H1 (cell line): ENCODE measurements at regions of chr18 and their contacts with region 1.

Region 1: DNA sequence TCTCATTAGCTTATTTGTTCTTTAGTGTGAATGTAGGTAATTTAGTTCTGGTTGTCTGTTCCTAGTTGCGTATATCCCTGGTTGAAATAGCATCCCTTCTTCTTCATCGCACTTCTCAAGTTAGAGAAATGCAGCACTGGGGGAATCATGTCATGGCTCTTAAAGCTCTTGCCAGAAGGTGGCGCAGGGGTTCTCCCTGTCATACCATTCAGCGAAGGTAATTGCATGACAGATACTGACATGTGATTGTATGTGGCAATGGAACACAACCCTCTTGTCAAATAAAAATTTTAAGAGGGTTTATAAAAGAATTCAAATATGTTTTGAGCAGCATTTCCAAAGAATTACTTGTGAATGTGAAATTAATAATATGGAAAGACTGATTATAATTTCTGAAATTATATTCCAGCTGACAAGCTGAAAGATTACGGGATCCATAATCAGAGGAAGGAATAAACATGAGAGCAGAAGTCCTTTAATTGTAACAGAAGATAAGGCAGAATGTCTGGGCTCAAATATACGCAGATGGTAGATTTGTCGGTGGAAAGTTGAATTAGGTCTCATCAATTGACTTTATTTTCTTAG is 411.7 kb downstream of the DSEL start:
- DNase-seq: peak; percentile 25 to 69
- H3K4me3 ChIP-seq: no peak overlapping the region
- H3K27ac ChIP-seq: no peak overlapping the region
- H3K4me1 ChIP-seq: no peaks in the 10 kb centered on the region
- H3K27me3 ChIP-seq: no peaks in the 10 kb centered on the region
- CTCF ChIP-seq: peak; percentile 40 to 83 (median 72)
- EP300 ChIP-seq: no peak
- POLR2A ChIP-seq: no peak
- RAD21 ChIP-seq: peak; percentile 80 to 84

Region 2: DNA sequence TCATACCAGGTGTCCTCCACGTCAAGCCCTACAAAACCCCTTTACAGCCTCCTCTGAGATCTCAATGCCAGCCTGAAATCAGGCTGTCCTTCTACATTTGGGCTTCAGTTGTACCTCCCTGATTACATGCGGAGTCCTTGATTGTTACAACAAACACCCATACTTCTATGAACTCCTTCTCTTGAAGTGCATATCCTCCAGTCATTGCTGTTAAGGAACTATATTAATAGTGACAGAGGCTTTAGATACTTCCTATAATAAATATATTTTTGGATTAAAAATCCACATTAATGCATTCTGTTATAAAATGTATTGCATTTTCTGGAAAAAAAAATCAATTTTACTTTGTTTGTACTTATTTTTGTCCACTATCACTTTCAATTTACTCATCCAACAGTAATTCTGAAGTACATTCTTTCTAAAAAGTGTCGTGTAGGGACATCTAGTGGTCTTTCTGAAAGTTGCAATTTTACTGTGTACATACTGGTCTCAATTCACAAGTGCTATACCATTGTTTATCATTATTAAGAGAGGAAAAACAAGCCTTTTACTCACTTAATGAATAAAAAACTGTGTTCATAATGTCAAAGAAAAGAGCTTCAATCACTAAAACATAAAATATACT is 95.3 kb after region 1 on chr18:
- CTCF ChIA-PET with region 1: interaction called, 33 read pairs
- POLR2A ChIA-PET with region 1: interaction called, 3 read pairs
- DNase-seq: no peak
- H3K4me3 ChIP-seq: no peak overlapping the region
- H3K27ac ChIP-seq: no peak overlapping the region
- H3K4me1 ChIP-seq: no peaks in the 10 kb centered on the region; a peak in 1 of 7 replicates
- H3K27me3 ChIP-seq: no peaks in the 10 kb centered on the region
- CTCF ChIP-seq: peak in 2 of 3 experiments; percentile 33 to 50; a peak in 2 of 4 replicates
- EP300 ChIP-seq: no peak
- POLR2A ChIP-seq: no peak
- RAD21 ChIP-seq: peak; percentile 65 to 75

Region 3: GRCh38 chr18:67217551-67218166 is 112.9 kb after region 1 on chr18:
- CTCF ChIA-PET with region 1: no interaction called
- POLR2A ChIA-PET with region 1: no interaction called
- DNase-seq: peak in 1 of 2 experiments; percentile 62
- H3K4me3 ChIP-seq: no peak overlapping the region
- H3K27ac ChIP-seq: no peak overlapping the region
- H3K4me1 ChIP-seq: no peaks in the 10 kb centered on the region
- H3K27me3 ChIP-seq: no peaks in the 10 kb centered on the region
- CTCF ChIP-seq: peak in 2 of 3 experiments; percentile 58 to 63; a peak in 3 of 4 replicates
- EP300 ChIP-seq: no peak
- POLR2A ChIP-seq: no peak
- RAD21 ChIP-seq: peak; percentile 93 to 95